Activated CD4-positive, alpha-beta memory T cell treated with anti-CD3 and anti-CD28 coated beads for 36 hours (primary cell): ENCODE measurements at regions of chr9 and their contacts with region 1.

Region 1: GRCh38 chr9:4984621-4985385 is at the start of gene JAK2:
- DNase-seq: peak; percentile 91
- H3K4me3 Mint-ChIP-seq: peak within 1 kb of the TSS; percentile 90
- H3K27ac Mint-ChIP-seq: peak within 1 kb of the TSS; percentile 96
- H3K4me1 Mint-ChIP-seq: peaks cover 52% of the 10 kb centered on the region
- H3K27me3 Mint-ChIP-seq: no peaks in the 10 kb centered on the region
- total RNA-seq, gene JAK2: 23.2 to 25.5 TPM

Region 2: GRCh38 chr9:4679268-4680172 is 305.3 kb before region 1 on chr9 and contains the start of gene CDC37L1:
- CTCF ChIA-PET with region 1: no interaction called
- POLR2A ChIA-PET with region 1: no interaction called
- intact Hi-C with region 1: loop called (anchors 5 kb)
- DNase-seq: peak; percentile 99
- H3K4me3 Mint-ChIP-seq: no peak within 1 kb of the TSS
- H3K27ac Mint-ChIP-seq: no peak within 1 kb of the TSS
- H3K4me1 Mint-ChIP-seq: peaks cover 10% of the 10 kb centered on the region
- H3K27me3 Mint-ChIP-seq: no peaks in the 10 kb centered on the region
- total RNA-seq, gene CDC37L1: 9.7 to 11.0 TPM

Region 3: DNA sequence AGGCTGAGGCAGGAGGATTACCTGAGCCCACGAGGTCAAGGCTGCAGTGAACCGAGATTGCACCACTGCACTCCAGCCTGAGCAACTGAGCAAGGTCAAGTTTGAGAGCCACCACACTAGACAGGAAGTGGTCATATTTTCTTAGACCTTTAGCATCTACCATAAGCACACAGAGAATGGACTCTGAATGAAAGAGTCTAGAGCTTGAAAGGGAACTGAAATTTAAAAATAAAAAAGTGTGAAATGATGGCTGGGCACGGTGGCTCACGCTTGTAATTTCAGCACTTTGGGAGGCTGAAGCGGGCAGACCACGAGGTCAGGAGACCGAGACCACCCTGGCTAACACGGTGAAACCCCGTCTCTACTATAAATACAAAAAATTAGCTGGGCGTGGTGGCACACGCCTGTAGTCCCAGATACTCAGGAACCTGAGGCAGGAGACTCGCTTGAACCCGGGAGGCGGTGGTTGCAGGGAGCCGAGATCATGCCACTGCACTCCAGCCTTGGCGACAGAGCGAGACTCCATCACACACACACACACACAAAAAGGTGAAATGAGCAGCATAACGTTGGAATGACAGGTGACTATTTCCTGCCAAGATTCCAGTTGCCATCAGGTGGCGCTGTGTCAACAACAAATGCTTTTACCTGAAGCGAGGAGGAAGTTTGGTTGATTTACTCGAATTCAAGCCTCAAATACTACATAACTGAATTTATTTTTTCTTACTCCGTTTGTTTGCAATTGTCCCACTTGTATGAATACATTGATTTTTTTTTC is 222.5 kb before region 1 on chr9:
- CTCF ChIA-PET with region 1: interaction called, 106 read pairs
- POLR2A ChIA-PET with region 1: no interaction called
- intact Hi-C with region 1: loop called (anchors 1 kb)
- DNase-seq: peak; percentile 88
- H3K4me3 Mint-ChIP-seq: peak overlapping the region; percentile 17
- H3K27ac Mint-ChIP-seq: peak overlapping the region; percentile 42
- H3K4me1 Mint-ChIP-seq: peaks cover 11% of the 10 kb centered on the region
- H3K27me3 Mint-ChIP-seq: peaks cover 3% of the 10 kb centered on the region

Region 4: DNA sequence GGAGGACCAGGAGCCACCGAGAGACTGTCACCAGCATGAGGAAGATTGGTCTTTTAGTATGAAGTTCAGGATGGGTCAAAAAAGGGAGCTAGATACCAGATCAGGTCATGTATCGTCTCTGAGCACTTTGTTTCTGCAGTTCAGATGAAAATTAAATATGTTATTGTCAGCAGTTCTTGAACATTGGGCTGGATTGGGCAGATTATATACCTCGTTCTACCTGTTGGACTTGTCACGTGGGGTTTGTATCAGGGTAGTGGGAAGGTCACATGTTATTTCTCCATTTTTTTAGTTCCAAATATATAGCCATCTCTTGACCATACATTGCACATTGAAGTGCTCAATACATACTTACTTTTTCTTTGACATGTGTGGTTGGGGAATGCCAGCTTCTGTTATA is 144.7 kb before region 1 on chr9:
- CTCF ChIA-PET with region 1: no interaction called
- POLR2A ChIA-PET with region 1: no interaction called
- intact Hi-C with region 1: no loop called
- DNase-seq: no peak
- H3K4me3 Mint-ChIP-seq: no peak overlapping the region
- H3K27ac Mint-ChIP-seq: peak overlapping the region; percentile 9
- H3K4me1 Mint-ChIP-seq: peaks cover 54% of the 10 kb centered on the region
- H3K27me3 Mint-ChIP-seq: no peaks in the 10 kb centered on the region

Region 5: GRCh38 chr9:4866239-4866969 is 118.4 kb before region 1 on chr9:
- CTCF ChIA-PET with region 1: interaction called, 9 read pairs
- POLR2A ChIA-PET with region 1: interaction called, 3 read pairs
- intact Hi-C with region 1: loop called (anchors 2 kb)
- DNase-seq: peak; percentile 25
- H3K4me3 Mint-ChIP-seq: peak overlapping the region; percentile 35
- H3K27ac Mint-ChIP-seq: peak overlapping the region; percentile 77
- H3K4me1 Mint-ChIP-seq: peaks cover 19% of the 10 kb centered on the region
- H3K27me3 Mint-ChIP-seq: no peaks in the 10 kb centered on the region

Region 6: GRCh38 chr9:4970970-4971641 is 13.7 kb before region 1 on chr9:
- CTCF ChIA-PET with region 1: interaction called, 12 read pairs
- POLR2A ChIA-PET with region 1: interaction called, 20 read pairs
- intact Hi-C with region 1: loop called (anchors 1 kb)
- DNase-seq: peak; percentile 86
- H3K4me3 Mint-ChIP-seq: no peak overlapping the region
- H3K27ac Mint-ChIP-seq: no peak overlapping the region
- H3K4me1 Mint-ChIP-seq: peaks cover 26% of the 10 kb centered on the region
- H3K27me3 Mint-ChIP-seq: no peaks in the 10 kb centered on the region

Region 7: DNA sequence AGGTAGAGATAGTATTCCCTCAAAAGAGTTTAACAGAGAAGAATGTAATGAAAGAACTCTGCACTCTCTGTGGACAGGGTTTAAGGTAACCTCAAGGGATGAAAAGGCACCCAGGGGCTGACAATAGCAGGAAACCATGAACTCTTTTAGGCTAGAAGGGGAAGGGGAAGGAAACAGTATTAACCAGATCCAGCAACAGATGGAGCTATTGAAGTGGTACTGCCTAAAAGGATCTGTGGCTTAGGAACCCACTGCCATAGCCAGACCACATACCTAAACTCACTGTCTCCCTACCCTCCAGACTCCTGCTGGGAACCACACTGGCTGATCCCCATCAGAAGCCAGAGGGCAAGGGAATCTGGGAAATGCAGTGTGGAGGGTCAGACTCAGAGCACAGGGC is 417.4 kb after region 1 on chr9:
- CTCF ChIA-PET with region 1: no interaction called
- POLR2A ChIA-PET with region 1: no interaction called
- intact Hi-C with region 1: no loop called
- DNase-seq: no peak
- H3K4me3 Mint-ChIP-seq: no peak overlapping the region
- H3K27ac Mint-ChIP-seq: peak overlapping the region; percentile 14
- H3K4me1 Mint-ChIP-seq: peaks cover 27% of the 10 kb centered on the region
- H3K27me3 Mint-ChIP-seq: no peaks in the 10 kb centered on the region

Region 8: DNA sequence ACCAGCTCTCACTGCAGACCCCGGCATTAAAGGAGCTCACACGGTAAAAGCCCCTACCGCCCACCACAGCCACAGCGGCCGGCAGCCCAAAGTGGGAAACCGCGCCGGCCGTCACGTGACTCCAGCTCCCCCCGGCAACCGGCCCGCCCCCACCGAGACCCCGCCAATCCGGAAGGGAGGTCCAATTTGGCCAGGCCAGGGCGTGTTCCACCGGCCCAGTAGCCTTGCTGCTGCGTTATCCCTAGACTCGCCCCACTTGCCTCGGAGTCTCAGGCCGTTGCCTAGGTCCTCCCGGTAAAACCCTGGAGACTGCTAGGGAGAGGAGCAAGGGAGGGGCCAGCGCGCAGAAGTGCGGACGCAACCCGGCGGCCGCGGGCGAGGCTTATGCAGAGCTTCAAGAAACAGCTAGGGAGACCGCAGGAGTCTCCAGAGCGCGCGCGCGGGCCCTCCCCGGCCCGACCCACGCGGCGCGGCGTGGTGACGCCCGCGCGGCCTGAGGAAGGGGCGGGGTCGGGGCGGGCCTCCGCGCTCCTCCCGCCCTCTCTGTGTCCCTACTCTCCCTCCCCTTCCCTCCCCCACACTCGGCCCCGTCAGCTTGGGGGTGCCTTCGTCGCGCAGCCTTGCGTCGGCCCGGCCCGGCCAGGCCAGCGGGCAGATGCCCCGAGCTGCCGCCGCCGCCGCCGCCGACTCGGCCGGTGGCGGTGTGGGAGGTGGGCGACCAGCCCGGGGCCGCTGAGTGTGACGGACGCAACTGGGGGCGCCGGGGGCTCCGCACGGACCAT is 643.9 kb after region 1 on chr9 and contains the start of gene RIC1:
- CTCF ChIA-PET with region 1: interaction called, 3 read pairs
- POLR2A ChIA-PET with region 1: interaction called, 3 read pairs
- intact Hi-C with region 1: loop called (anchors 5 kb)
- DNase-seq: peak; percentile 94
- H3K4me3 Mint-ChIP-seq: peak within 1 kb of the TSS; percentile 98
- H3K27ac Mint-ChIP-seq: peak within 1 kb of the TSS; percentile 100
- H3K4me1 Mint-ChIP-seq: peaks cover 62% of the 10 kb centered on the region
- H3K27me3 Mint-ChIP-seq: no peaks in the 10 kb centered on the region
- total RNA-seq, gene RIC1: 14.1 to 15.0 TPM